Gastrocnemius medialis (tissue), 4 donors: ENCODE measurements at regions of chr19 and their contacts with region 1.

Region 1: GRCh38 chr19:46016426-46017094 is 6.3 kb downstream of the PGLYRP1 start:
- DNase-seq: peak; percentile 52 to 60
- ATAC-seq: peak; percentile 85 to 87
- H3K4me3 ChIP-seq: peak overlapping the region; percentile 64 to 92 (median 71)
- H3K27ac ChIP-seq: peak overlapping the region in 2 of 4 donors; percentile 9 to 37
- H3K4me1 ChIP-seq: peaks cover 0 to 15% of the 10 kb centered on the region in 2 donors
- H3K27me3 ChIP-seq: peaks cover 38 to 41% (median 38%) of the 10 kb centered on the region in 3 donors
- CTCF ChIP-seq: peak; percentile 37 to 91 (median 69)
- POLR2A ChIP-seq: no peak

Region 2: GRCh38 chr19:45817010-45817724 is 199.4 kb before region 1 on chr19:
- in situ Hi-C with region 1: no loop called
- intact Hi-C with region 1: loop called (anchors 5 kb)
- DNase-seq: peak; percentile 78 to 88
- ATAC-seq: peak; percentile 85 to 95
- H3K4me3 ChIP-seq: no peak overlapping the region
- H3K27ac ChIP-seq: no peak overlapping the region
- H3K4me1 ChIP-seq: peaks cover 0 to 3% of the 10 kb centered on the region in 2 donors
- H3K27me3 ChIP-seq: peaks cover 0 to 11% (median 5%) of the 10 kb centered on the region in 3 donors
- CTCF ChIP-seq: peak; percentile 87 to 96 (median 92)
- POLR2A ChIP-seq: no peak

Region 3: DNA sequence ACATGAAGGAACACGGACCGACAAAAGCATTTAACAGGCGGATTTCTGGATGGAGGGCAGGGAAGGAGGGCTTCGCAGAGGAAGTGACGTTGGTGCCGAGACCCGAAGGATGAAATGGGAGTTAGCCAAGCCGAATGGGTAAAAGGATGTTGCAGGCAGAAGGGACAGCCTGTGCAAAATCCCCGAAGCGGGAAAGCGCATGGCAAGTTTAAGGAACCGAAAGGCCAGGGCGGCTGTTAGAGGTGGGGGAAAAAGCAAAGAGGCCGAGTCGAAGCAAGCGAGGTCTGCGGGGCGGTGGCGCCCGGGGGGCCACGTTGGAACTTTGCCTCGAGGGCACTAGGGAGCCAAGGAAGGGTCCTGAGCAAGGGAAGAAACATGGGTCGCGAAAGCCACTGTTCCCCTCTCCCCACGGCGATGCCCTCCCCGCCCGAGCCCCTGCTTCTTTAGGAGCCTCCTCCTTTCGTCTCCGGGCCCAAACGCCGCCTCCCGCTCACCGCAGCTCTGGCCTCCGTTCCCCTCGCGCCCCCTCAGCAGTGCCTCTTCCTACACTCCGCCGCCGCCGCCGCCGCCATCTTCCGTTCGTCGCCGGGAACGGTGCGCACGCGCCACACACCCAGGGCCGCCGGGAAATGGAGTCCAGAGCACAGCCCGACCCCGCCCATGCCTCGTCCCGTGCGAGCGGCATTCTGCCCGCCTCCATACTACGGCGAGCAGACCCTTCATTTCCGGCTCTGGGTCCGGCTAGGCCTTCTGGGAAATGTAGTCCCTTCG is 153.8 kb before region 1 on chr19 and contains the start of gene SYMPK:
- in situ Hi-C with region 1: no loop called
- intact Hi-C with region 1: loop called (anchors 1 kb)
- DNase-seq: peak; percentile 98 to 99
- ATAC-seq: peak; percentile 99
- H3K4me3 ChIP-seq: peak within 1 kb of the TSS; percentile 62 to 95 (median 86)
- H3K27ac ChIP-seq: peak within 1 kb of the TSS; percentile 85 to 95 (median 90)
- H3K4me1 ChIP-seq: peaks cover 17 to 22% of the 10 kb centered on the region in 2 donors
- H3K27me3 ChIP-seq: peaks cover 10 to 16% (median 10%) of the 10 kb centered on the region in 3 donors
- CTCF ChIP-seq: no peak
- POLR2A ChIP-seq: peak; percentile 62 to 82
- total RNA-seq, gene SYMPK: 14.1 to 64.6 (median 34.9) TPM

Region 4: GRCh38 chr19:45927565-45928261 is 88.8 kb before region 1 on chr19:
- in situ Hi-C with region 1: no loop called
- intact Hi-C with region 1: loop called (anchors 5 kb)
- DNase-seq: peak; percentile 84 to 85
- ATAC-seq: peak; percentile 87 to 99
- H3K4me3 ChIP-seq: peak overlapping the region in 2 of 4 donors; percentile 0 to 15
- H3K27ac ChIP-seq: no peak overlapping the region
- H3K4me1 ChIP-seq: peaks cover 0 to 7% of the 10 kb centered on the region in 2 donors
- H3K27me3 ChIP-seq: no peaks in the 10 kb centered on the region
- CTCF ChIP-seq: peak in 1 of 5 experiments; percentile 9
- POLR2A ChIP-seq: no peak

Region 5: DNA sequence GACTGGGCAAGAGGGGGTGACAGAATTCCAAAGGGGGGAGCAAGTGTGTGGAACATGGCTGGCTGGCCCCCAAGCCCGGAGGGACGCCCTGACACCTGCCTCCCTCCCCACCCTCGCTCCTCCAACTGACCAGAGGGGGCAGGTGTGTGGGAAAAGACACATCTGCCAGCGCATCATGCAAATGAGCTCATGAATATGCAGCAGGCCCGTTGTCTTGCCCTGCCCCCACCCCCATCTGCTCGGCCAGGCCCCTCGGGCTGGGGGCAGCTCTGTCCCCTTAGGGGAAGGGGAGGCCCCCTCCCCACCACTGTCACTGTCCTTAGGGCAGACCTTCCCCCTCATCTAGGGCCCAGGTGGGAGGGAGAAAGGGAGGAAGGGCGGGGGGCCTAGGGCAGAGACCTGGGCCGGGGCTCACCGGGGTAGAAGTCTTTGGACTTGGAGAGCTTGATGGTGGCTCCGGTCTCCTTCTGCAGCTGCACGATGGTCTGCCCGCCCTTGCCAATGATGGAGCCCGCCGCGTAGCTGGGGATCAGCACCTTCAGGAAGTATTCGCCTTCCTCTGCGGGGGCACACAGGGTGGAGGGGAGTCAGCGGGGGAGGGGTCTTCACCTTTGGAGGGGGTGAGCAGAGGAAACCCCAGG is 55.8 kb before region 1 on chr19:
- in situ Hi-C with region 1: no loop called
- intact Hi-C with region 1: no loop called
- DNase-seq: no peak
- ATAC-seq: no peak
- H3K4me3 ChIP-seq: no peak overlapping the region
- H3K27ac ChIP-seq: peak overlapping the region; percentile 22 to 55 (median 48)
- H3K4me1 ChIP-seq: no peaks in the 10 kb centered on the region
- H3K27me3 ChIP-seq: peaks cover 8 to 16% (median 9%) of the 10 kb centered on the region in 3 donors
- CTCF ChIP-seq: no peak
- POLR2A ChIP-seq: no peak

Region 6: GRCh38 chr19:45994989-45995714 is 21.4 kb before region 1 on chr19 and contains the start of gene CCDC61:
- in situ Hi-C with region 1: no loop called
- intact Hi-C with region 1: loop called (anchors 2 kb)
- DNase-seq: peak; percentile 97 to 98
- ATAC-seq: peak; percentile 100
- H3K4me3 ChIP-seq: peak within 1 kb of the TSS; percentile 74 to 93 (median 86)
- H3K27ac ChIP-seq: peak within 1 kb of the TSS; percentile 83 to 86 (median 85)
- H3K4me1 ChIP-seq: peaks cover 6 to 12% of the 10 kb centered on the region in 2 donors
- H3K27me3 ChIP-seq: peaks cover 0 to 12% (median 4%) of the 10 kb centered on the region in 3 donors
- CTCF ChIP-seq: no peak
- POLR2A ChIP-seq: peak; percentile 76 to 81
- total RNA-seq, gene CCDC61: 2.3 to 4.9 (median 3.4) TPM

Region 7: GRCh38 chr19:46254776-46255175 is 238.2 kb after region 1 on chr19:
- in situ Hi-C with region 1: no loop called
- intact Hi-C with region 1: no loop called
- DNase-seq: no peak
- ATAC-seq: no peak
- H3K4me3 ChIP-seq: no peak overlapping the region
- H3K27ac ChIP-seq: no peak overlapping the region
- H3K4me1 ChIP-seq: no peaks in the 10 kb centered on the region
- H3K27me3 ChIP-seq: peaks cover 0 to 18% (median 15%) of the 10 kb centered on the region in 3 donors
- CTCF ChIP-seq: no peak
- POLR2A ChIP-seq: no peak